ENCODE measurements at regions of chr17 and their contacts with region 1.

Region 1: DNA sequence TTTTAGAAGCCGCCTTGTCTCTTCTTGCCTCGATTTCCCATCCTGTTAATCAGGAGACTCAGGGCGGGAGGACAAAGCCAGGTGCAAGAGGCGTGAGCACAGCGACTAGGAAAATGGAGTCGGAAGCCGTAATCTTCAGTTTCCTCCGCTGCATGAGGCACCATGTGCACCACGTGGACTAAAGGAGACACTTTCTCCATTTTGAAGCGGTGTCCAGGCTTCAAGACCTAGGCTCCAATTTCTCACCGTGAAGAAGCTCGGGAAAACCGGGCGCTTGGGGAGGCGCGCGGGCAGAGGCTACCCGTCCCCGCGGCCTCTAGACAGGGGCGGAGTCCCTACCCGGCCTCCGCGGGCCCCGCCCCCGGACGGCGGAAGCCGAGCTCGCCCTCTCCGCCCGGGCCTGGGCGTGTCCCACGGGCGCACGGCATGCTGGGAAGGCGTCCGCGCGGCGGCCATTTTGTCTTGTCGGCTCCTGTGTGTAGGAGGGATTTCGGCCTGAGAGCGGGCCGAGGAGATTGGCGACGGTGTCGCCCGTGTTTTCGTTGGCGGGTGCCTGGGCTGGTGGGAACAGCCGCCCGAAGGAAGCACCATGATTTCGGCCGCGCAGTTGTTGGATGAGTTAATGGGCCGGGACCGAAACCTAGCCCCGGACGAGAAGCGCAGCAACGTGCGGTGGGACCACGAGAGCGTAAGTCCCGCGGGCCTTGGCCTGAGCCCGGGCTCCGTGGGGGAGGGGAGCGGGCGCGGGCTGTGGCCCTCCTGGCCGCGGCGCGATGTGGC is at the start of gene LUC7L3:
- DNase-seq: peak; percentile 71
- ATAC-seq: peak; percentile 94
- H3K4me3 ChIP-seq: peak within 1 kb of the TSS; percentile 86
- H3K27ac ChIP-seq: peak within 1 kb of the TSS; percentile 96
- H3K4me1 ChIP-seq: no peaks in the 10 kb centered on the region; the same call in 1 of the 2 replicates
- H3K27me3 ChIP-seq: no peaks in the 10 kb centered on the region
- CTCF ChIP-seq: no peak
- EP300 ChIP-seq: no peak
- POLR2A ChIP-seq: peak; percentile 99
- RAD21 ChIP-seq: no peak
- polyA plus RNA-seq, gene LUC7L3: 133 to 164 TPM

Region 2: DNA sequence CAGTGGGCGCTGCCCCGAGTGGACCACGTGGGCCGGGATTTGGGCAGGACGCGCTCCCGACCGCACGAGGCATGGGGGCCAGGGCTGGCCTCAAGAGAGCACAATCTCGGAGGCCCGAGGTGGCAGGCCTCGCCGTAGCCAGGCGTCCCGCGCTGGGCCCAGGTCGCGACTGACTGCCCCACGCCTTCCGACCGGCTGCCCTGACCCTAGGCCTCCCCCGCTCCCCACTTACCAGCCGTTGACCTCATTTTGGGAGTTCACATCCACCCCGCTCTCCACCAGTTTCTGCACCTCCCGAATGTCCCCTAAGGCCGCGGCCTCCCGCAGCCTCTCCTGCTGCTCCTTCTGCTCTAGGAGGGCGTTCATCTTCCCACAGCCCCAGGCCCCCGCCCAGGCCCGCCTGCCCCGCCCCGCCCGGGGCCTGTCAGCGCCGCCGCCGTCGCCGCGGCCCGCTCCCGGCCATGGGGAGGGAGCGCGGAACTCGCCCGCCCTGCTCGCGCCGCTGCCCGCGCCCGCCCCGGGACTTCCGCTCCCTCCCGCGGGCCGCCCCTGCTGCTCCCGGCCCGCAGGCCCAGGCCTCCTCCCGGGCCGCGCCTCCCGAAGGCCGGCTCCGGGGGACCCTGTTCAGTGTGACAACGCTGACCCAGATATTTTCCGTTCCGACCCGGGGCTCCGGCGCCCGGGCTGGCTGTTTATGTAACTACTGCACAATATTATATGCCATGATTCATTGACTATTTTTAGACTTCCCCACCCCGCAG is 11.9 kb before region 1 on chr17 and contains the start of gene ANKRD40:
- CTCF ChIA-PET with region 1: interaction called, 5 read pairs
- POLR2A ChIA-PET with region 1: interaction called, 25 read pairs
- RAD21 ChIA-PET with region 1: interaction called, 5 read pairs
- SMC1A ChIA-PET with region 1: interaction called, 5 read pairs
- in situ Hi-C with region 1: no loop called
- intact Hi-C with region 1: loop called (anchors 1 kb)
- DNase-seq: peak; percentile 67
- ATAC-seq: peak; percentile 78
- H3K4me3 ChIP-seq: peak within 1 kb of the TSS; percentile 81
- H3K27ac ChIP-seq: peak within 1 kb of the TSS; percentile 86
- H3K4me1 ChIP-seq: peaks cover 9% of the 10 kb centered on the region
- H3K27me3 ChIP-seq: no peaks in the 10 kb centered on the region
- CTCF ChIP-seq: no peak
- EP300 ChIP-seq: 0 out of 4 replicates have a peak, but pooled peaks of 1 of the 2 experiments have one; percentile 9
- POLR2A ChIP-seq: peak; percentile 80
- RAD21 ChIP-seq: no peak
- polyA plus RNA-seq, gene ANKRD40: 6.7 to 6.9 TPM

Measured in GM12878 (cell line).